ENCODE measurements at regions of chr20 and their contacts with region 1.

Region 1: DNA sequence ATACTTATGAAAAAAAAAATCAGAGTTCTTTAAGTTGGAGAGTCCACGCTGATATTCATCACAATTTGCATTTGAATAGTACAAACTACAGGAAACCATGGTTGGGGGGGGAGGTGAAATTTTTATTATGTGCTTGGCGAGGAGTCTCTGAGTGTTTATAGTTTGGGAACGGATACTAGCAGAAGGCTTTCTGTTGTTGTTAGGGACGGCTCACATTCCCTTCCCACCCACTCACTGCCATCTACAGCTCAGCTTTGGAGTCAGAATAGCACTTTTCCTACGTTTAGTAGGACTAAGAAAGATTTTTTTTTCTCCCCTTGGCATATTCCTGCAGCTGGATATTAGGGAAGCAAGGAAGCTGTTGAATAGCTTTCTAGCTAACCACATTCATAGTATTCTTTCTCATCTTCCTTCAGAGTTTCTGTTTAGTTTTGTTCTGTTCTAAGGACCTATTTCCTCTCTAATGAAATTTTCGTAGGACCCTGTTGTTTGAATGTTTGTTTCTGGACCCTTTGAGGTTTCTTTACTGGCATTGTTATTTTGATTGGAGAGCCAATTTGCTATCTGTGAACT is 235.1 kb upstream of the ZNF217 start:
- DNase-seq: peak; percentile 96
- H3K4me3 ChIP-seq: peak overlapping the region in 2 of 3 experiments; percentile 19 to 57
- H3K27ac ChIP-seq: peak overlapping the region; percentile 100
- H3K4me1 ChIP-seq: peaks cover 35% of the 10 kb centered on the region
- H3K27me3 ChIP-seq: no peaks in the 10 kb centered on the region
- CTCF ChIP-seq: no peak
- POLR2A ChIP-seq: peak; percentile 47

Region 2: DNA sequence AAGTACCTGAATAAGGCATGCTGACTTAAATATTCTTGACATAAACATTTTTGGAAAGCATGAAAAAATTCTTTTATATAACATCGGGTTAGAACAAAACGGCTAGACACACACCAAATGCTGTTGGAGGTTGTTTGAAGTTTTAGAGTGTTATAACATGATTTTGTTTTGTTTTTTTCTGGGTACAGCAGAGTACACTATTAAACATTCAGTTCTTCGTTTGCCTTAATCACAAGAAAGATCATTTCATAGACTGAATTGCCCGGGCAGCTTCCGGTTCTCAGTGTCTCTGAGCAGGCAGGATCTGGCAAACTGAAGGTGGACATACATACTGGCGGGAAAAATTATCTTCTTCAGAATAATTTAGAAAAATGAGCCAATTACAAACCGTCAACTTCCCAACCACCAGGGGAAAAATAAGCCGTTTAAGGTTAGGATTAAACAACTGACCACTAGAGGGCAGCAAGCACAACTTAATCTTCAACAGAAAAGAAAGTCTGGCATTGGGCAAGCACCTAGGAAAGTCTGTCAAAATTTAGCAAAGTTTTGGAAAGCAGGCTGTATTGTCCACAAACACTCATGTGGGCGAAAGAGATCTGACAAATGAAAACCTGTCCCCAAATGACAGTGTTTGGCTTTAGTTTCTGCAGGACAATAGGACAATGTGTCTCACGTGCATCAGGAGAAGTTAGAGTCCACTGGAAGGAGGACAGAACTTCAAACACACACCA is 250.1 kb before region 1 on chr20:
- CTCF ChIA-PET with region 1: no interaction called
- POLR2A ChIA-PET with region 1: no interaction called
- dilution Hi-C with region 1: no loop called
- intact Hi-C with region 1: loop called (anchors 1 kb)
- DNase-seq: peak; percentile 90
- H3K4me3 ChIP-seq: peak overlapping the region in 1 of 3 experiments; percentile 23
- H3K27ac ChIP-seq: peak overlapping the region; percentile 43
- H3K4me1 ChIP-seq: peaks cover 20% of the 10 kb centered on the region
- H3K27me3 ChIP-seq: no peaks in the 10 kb centered on the region
- CTCF ChIP-seq: peak; percentile 60 to 75
- POLR2A ChIP-seq: peak; percentile 13

Region 3: GRCh38 chr20:53623454-53624211 is 205.1 kb before region 1 on chr20:
- CTCF ChIA-PET with region 1: interaction called, 3 read pairs
- POLR2A ChIA-PET with region 1: no interaction called
- dilution Hi-C with region 1: no loop called
- intact Hi-C with region 1: loop called (anchors 1 kb)
- DNase-seq: peak; percentile 85
- H3K4me3 ChIP-seq: peak overlapping the region in 1 of 3 experiments; percentile 43
- H3K27ac ChIP-seq: peak overlapping the region; percentile 92
- H3K4me1 ChIP-seq: peaks cover 26% of the 10 kb centered on the region
- H3K27me3 ChIP-seq: no peaks in the 10 kb centered on the region
- CTCF ChIP-seq: no peak
- POLR2A ChIP-seq: no peak

Region 4: GRCh38 chr20:53677447-53678314 is 151.1 kb before region 1 on chr20:
- CTCF ChIA-PET with region 1: no interaction called
- POLR2A ChIA-PET with region 1: no interaction called
- dilution Hi-C with region 1: no loop called
- intact Hi-C with region 1: loop called (anchors 5 kb)
- DNase-seq: peak; percentile 49
- H3K4me3 ChIP-seq: no peak overlapping the region
- H3K27ac ChIP-seq: no peak overlapping the region
- H3K4me1 ChIP-seq: peaks cover 12% of the 10 kb centered on the region
- H3K27me3 ChIP-seq: no peaks in the 10 kb centered on the region
- CTCF ChIP-seq: peak in 1 of 2 donors; percentile 5
- POLR2A ChIP-seq: no peak

Region 5: GRCh38 chr20:53786445-53787267 is 42.1 kb before region 1 on chr20:
- CTCF ChIA-PET with region 1: no interaction called
- POLR2A ChIA-PET with region 1: no interaction called
- dilution Hi-C with region 1: no loop called
- intact Hi-C with region 1: loop called (anchors 1 kb)
- DNase-seq: peak; percentile 70
- H3K4me3 ChIP-seq: no peak overlapping the region
- H3K27ac ChIP-seq: no peak overlapping the region
- H3K4me1 ChIP-seq: peaks cover 24% of the 10 kb centered on the region
- H3K27me3 ChIP-seq: no peaks in the 10 kb centered on the region
- CTCF ChIP-seq: peak in 1 of 2 donors; percentile 6
- POLR2A ChIP-seq: no peak

Region 6: DNA sequence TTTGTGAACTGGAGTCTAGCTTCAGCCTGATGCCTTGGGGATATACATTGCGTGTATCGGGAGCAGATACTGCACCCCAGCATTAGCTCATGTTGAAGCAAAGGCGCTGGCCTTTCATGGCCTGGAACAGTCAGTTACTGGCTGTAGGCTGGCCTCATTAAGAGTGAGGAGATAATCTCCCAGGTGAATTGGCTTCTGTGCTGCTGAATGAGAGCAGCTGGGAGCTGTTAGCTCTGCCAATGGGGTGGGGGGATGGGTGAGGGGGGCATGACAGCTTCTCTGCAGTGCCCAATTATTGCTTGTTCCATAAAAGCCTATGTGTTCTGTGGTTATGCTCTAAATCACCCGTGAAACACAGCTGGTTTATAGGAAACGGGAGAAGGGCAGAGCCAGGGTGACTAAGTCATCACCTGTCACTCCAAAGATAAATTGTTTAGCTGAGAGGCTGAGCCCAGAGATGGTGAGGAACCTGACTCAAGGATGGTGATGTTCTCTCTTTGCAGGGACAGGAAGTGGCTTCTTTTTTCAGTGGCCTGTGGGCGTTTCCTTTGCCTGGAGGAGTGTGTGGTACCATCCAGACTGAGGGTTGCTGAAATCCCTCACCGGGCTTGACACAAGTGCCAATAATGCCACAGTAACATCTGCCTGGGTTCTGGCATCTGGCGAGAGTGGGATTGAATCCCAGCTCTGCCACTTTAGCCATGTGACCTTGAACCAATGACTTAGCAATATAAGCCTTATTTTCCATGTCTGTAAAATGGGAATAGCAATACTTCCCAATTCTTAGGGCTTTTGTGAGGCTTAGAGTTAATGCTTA is 70.8 kb after region 1 on chr20:
- CTCF ChIA-PET with region 1: interaction called, 3 read pairs
- POLR2A ChIA-PET with region 1: interaction called, 3 read pairs
- dilution Hi-C with region 1: no loop called
- intact Hi-C with region 1: loop called (anchors 1 kb)
- DNase-seq: peak; percentile 47
- H3K4me3 ChIP-seq: no peak overlapping the region
- H3K27ac ChIP-seq: peak overlapping the region; percentile 97
- H3K4me1 ChIP-seq: peaks cover 50% of the 10 kb centered on the region
- H3K27me3 ChIP-seq: no peaks in the 10 kb centered on the region
- CTCF ChIP-seq: no peak
- POLR2A ChIP-seq: no peak

Measured in endothelial cell of umbilical vein (primary cell).